A673 (cell line): ENCODE measurements at regions of chr2 and their contacts with region 1.

Region 1: DNA sequence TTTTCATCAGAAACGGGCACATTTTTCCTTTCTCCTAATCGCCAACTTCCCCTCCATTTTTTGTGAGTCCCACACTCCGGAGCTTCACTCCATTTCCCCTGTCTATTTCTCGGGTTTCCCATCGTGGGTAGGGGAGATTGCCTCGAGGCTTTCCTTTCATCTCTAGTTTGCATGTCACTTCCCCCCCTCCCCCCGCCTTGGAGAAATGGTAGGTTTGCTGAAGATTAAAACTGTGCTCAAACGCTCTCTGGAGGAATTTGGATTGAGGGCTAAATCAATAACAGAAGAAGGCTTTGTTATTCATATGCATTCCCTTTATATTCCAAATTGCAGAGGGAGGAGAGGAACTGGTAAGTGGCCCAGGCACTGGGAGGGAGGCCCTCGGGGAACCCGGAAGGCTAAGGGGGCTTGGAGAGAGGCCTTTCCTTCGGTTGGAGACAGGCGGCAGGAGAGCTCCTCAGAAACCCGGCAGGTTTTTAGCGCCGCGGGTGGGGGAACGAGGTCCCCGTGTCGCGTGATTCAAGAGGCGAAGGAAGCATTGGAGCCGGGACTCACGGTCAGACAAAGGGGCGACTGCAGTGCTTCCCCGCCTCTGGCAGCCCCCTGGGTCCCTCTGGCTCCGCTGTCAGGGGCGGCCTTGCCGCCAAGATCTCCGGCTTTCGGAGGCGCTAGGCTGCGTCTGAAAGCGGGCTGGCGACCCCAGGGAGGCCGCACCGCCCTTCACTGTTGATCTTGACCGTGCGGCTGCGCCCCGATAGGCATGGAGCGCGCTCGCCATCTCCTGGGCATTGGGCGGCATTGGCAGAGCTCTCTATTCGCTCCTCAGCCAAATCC is 2.4 kb upstream of the HOXD12 start:
- DNase-seq: peak; percentile 95
- H3K4me3 ChIP-seq: peak overlapping the region; percentile 68
- H3K27ac ChIP-seq: peak overlapping the region; percentile 87
- H3K4me1 ChIP-seq: peaks cover 41% of the 10 kb centered on the region
- H3K27me3 ChIP-seq: no peaks in the 10 kb centered on the region
- CTCF ChIP-seq: peak; percentile 93

Region 2: DNA sequence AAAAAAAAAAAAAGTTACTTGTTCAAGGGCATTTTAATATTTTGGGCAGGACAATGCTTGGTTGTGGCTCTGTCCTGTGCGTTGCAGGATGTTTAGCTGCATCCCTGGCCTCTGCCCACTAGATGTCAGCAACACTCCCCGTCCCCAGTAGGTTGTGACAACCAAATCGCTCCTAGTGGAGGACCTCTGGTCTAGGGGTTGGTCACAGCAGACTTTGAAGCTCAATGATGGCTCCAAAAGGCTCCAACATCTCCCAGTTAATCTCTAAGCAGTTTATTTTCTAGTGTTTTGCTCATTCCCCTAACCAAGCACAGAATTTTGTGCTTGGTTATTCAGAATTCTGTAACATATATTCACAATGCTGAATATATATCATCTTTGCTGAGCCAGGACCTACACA is 1399.9 kb before region 1 on chr2:
- CTCF ChIA-PET with region 1: no interaction called
- POLR2A ChIA-PET with region 1: no interaction called
- intact Hi-C with region 1: loop called (anchors 5 kb)
- DNase-seq: peak; percentile 63
- H3K4me3 ChIP-seq: no peak overlapping the region
- H3K27ac ChIP-seq: no peak overlapping the region
- H3K4me1 ChIP-seq: no peaks in the 10 kb centered on the region
- H3K27me3 ChIP-seq: peaks cover 18% of the 10 kb centered on the region
- CTCF ChIP-seq: peak; percentile 83

Region 3: DNA sequence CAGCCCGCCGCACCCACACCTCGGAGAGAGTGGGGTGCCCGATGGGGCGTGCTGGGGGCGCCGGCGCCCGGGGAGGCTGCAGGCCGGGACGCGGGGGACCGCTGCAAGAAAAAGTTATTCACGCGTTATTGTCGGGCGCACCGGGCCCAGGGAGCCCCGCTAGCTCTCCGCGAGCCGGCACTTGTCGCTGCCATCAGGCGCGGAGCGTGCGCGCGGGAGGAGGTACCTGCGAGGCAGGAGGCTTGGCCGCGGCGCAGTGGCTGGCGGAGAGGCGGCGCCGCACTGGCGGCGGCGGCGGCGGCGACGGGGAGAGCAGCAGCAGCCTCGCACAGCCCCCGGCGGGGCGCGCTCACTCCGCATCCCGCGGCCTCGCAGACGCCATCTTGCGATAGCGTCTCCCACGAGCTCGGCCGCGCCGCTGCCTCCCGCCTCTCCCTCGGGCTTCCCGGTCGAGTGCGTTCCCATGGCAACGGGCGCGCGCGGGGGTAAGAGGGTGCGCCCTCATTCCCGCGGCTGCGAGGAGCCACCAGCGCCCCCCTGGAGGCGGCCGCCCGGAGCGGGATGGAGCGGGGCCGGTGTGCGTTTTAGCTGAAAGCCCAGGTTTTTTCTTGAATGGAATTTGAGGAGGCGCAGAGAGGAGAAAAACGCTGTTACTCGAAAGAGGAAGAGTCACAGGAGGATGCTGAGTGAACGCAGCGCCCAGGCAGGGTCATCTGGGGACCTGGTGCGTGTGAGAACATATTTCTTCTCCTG is 1092.0 kb before region 1 on chr2 and contains the start of gene CHN1:
- CTCF ChIA-PET with region 1: no interaction called
- POLR2A ChIA-PET with region 1: no interaction called
- intact Hi-C with region 1: loop called (anchors 10 kb)
- DNase-seq: peak; percentile 83
- H3K4me3 ChIP-seq: peak within 1 kb of the TSS; percentile 46
- H3K27ac ChIP-seq: no peak within 1 kb of the TSS
- H3K4me1 ChIP-seq: peaks cover 1% of the 10 kb centered on the region
- H3K27me3 ChIP-seq: peaks cover 67% of the 10 kb centered on the region
- CTCF ChIP-seq: no peak
- total RNA-seq, gene CHN1: 11.3 and 19.1 TPM in 2 replicates

Region 4: DNA sequence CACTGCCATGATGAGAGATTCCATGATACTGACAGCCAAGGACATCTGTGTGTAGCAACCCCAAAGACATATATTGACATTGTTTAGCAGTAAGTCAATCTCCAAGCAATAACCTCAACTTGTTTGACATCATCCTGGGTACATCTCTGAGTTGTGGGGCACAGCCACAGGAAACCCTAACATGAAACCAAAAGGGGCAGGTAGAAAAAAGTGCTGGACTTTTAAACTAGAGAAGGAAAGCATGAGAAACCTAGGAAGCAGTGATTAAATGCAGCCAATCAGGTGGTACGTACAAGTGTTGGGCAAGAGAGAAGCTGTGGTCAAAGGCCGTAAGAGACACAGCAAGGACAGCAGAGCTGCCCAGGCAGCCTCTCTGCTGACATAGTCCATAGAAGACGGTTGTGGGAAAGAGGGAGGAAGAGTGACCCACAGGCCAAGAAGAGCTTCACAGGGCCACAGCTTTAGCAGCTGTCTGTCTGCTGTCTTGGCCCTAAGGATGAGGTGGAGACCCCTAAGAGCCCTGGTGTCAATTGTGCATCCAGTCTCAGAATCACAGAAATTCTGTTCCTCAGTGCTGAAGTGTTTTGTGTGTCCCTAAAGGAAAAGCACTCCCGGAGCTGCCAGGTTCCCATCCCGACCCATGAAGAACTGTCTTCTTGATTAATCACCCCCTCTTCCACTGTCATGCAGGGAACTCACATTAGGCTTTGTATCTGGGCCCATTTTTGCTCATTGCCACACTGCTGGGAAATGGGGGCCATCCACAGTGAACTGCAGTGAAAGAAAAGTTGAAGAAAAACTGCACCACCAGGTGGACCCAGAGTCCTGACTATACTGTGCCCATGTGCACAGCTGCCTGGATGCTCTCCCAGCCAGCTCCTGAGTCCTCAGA is 1066.6 kb before region 1 on chr2:
- CTCF ChIA-PET with region 1: no interaction called
- POLR2A ChIA-PET with region 1: no interaction called
- intact Hi-C with region 1: loop called (anchors 5 kb)
- DNase-seq: peak; percentile 57
- H3K4me3 ChIP-seq: no peak overlapping the region
- H3K27ac ChIP-seq: no peak overlapping the region
- H3K4me1 ChIP-seq: no peaks in the 10 kb centered on the region
- H3K27me3 ChIP-seq: no peaks in the 10 kb centered on the region
- CTCF ChIP-seq: peak; percentile 57

Region 5: DNA sequence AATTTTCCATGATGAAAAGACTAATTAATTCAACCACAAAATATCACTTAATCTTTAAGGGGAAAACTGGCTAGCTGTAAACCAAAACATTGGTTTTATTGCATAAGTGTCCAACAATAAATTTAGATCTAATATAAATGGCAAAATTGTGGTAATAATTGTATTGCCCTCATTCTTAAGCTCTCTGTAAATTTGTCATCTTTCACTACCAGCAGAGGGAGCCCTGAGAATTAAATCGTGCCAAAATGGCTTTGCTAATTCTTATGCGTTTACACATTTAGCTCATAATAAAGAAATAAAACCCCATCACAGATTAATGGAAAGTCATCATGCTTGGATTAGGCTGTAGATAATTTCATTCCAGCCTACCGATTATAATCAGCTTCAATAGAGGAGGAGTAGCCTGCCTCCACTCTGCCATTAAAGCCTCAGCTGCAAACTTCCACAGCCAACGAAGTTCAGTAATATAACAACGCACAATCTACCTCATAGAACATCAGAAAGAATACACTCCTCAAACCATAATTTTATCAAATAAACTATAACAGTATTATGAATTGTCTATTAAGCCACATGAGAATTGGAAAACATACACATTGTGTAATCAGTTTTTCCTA is 845.7 kb before region 1 on chr2:
- CTCF ChIA-PET with region 1: interaction called, 18 read pairs
- POLR2A ChIA-PET with region 1: no interaction called
- intact Hi-C with region 1: loop called (anchors 1 kb)
- DNase-seq: peak; percentile 72
- H3K4me3 ChIP-seq: no peak overlapping the region
- H3K27ac ChIP-seq: no peak overlapping the region
- H3K4me1 ChIP-seq: no peaks in the 10 kb centered on the region
- H3K27me3 ChIP-seq: no peaks in the 10 kb centered on the region
- CTCF ChIP-seq: peak; percentile 84